CD4-positive, alpha-beta T cell (primary cell): ENCODE measurements at regions of chr12 and their contacts with region 1.

Region 1: DNA sequence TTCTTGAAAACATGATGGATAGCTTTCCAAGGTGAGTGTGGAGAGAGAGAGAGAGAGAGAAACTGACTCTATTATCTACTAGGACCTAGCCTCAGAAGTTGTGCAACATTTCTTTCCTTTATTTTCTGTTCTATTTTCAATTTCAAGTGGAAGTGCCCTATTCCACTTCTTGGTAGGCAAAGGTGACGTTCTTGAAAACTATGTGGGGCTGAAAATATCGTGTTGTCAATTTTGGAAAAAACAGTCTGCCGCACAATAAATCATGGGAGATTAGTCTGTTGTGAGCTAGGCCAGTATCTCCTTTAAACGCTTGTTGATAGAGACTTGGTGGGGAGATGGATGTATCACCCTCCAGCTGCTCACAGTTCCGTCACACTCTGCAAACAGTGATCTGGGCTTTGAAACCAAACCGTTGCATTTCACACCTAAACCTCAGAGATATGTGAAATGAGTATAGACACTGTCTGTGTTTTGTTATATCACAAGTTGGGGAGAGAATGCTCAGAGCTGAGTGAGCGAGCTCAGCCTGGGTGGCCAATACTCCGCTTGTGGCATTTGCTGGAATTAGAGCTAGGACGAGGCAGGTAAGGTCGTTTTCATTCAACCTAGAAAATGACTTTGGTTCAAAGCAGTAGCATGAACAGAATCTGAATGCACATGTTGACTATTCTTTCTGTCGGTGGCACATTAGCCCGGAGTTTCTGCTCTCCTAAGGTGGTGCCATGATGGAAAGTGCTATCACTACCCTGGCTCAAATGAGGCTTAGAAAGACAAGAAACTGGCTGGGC is 75.1 kb upstream of the ST8SIA1 start:
- DNase-seq: peak in 12 of 14 experiments; percentile 16 to 88 (median 26)
- ATAC-seq: peak; percentile 80
- H3K4me3 ChIP-seq: peak overlapping the region; percentile 38
- H3K4me3 Mint-ChIP-seq: peak overlapping the region; percentile 78
- H3K27ac ChIP-seq: peak overlapping the region; percentile 29 to 49
- H3K27ac Mint-ChIP-seq: peak overlapping the region; percentile 88
- H3K4me1 ChIP-seq: peaks cover 17% of the 10 kb centered on the region
- H3K4me1 Mint-ChIP-seq: peaks cover 20% of the 10 kb centered on the region
- H3K27me3 ChIP-seq: no peaks in the 10 kb centered on the region
- H3K27me3 Mint-ChIP-seq: no peaks in the 10 kb centered on the region
- CTCF ChIP-seq: no peak

Region 2: DNA sequence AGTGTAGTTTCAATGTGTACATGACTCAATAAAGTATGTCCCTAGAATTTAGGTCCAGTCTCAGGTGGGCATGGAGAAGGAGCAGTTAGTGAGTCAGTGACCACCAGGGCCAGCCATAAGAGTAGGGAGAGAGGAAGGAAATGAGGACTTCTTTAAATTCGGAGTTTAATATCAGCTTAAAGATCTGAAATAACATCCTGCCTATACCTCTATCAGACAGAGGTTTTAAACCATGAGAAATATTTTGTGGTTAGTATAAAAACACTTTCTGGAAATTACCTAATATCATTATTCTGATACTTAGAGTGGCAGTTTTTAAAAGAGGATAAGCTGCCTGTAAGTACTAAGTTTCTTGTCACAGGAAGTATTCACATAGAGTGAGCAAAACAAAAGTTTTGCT is 13.3 kb before region 1 on chr12:
- CTCF ChIA-PET with region 1: interaction called, 3 read pairs
- POLR2A ChIA-PET with region 1: interaction called, 13 read pairs
- intact Hi-C with region 1: no loop called
- DNase-seq: peak in 8 of 14 experiments; percentile 7 to 78 (median 30)
- ATAC-seq: peak; percentile 84
- H3K4me3 ChIP-seq: no peak overlapping the region
- H3K4me3 Mint-ChIP-seq: peak overlapping the region; percentile 80
- H3K27ac ChIP-seq: peak overlapping the region; percentile 66 to 75
- H3K27ac Mint-ChIP-seq: peak overlapping the region; percentile 85
- H3K4me1 ChIP-seq: peaks cover 28% of the 10 kb centered on the region
- H3K4me1 Mint-ChIP-seq: peaks cover 42% of the 10 kb centered on the region
- H3K27me3 ChIP-seq: no peaks in the 10 kb centered on the region
- H3K27me3 Mint-ChIP-seq: no peaks in the 10 kb centered on the region
- CTCF ChIP-seq: no peak